ENCODE measurements at regions of chr17 and their contacts with region 1.

Region 1: DNA sequence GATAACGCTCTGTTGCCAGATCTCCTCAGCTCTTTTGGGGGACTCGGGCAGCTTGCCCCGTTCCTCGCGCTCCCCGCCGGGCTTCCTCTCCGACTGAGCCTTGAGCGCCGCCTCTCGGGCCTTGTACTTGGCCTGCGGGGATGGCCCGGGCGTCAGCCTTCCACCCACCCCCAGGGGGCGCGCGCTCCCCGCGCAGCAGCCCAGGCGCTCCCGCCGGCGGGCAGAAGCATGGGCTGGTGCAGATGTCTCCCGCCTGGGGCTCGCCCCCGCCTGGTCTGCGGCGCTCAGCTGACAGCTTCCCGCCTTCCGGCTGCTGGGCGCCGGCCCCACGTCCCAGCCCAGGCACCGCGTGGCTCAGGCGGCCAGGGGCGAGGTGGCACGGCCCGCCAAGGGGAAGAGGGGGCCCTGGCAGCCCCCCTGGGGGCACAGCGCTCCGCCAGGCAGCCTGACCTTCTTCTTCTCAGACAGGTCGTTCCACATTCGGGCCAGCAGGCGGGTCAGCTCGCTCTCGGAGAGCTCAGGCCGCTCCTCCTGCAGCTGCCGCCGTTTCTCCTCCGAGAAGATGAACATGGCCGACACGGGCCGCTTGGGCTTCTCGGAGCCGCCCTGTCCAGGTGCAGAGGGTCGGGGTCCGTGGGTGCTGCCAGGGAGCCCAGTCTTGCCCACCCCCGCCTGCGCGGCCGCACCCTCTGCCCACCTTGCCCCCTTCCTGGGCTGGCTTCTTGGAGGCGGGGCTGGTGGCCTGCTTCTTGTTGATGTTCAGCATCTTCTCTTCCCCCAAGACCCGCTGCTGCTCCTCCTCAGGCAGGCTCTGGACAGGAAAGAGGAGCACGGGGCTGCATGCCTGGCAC is 8.9 kb downstream of the UBTF start:
- DNase-seq: peak; percentile 89
- H3K4me3 Mint-ChIP-seq: peak overlapping the region; percentile 73
- H3K27ac Mint-ChIP-seq: peak overlapping the region; percentile 91
- H3K4me1 Mint-ChIP-seq: peaks cover 33% of the 10 kb centered on the region
- H3K27me3 Mint-ChIP-seq: no peaks in the 10 kb centered on the region

Region 2: GRCh38 chr17:44199553-44200477 is 10.8 kb before region 1 on chr17 and contains the start of gene ATXN7L3:
- intact Hi-C with region 1: loop called (anchors 1 kb)
- DNase-seq: peak; percentile 97
- H3K4me3 Mint-ChIP-seq: peak within 1 kb of the TSS; percentile 94
- H3K27ac Mint-ChIP-seq: peak within 1 kb of the TSS; percentile 90
- H3K4me1 Mint-ChIP-seq: peaks cover 48% of the 10 kb centered on the region
- H3K27me3 Mint-ChIP-seq: no peaks in the 10 kb centered on the region
- total RNA-seq, gene ATXN7L3: 125 and 126 TPM in 2 replicates

Region 3: GRCh38 chr17:44331249-44331760 is 120.7 kb after region 1 on chr17:
- intact Hi-C with region 1: loop called (anchors 1 kb)
- DNase-seq: peak; percentile 65
- H3K4me3 Mint-ChIP-seq: no peak overlapping the region
- H3K27ac Mint-ChIP-seq: no peak overlapping the region
- H3K4me1 Mint-ChIP-seq: peaks cover 12% of the 10 kb centered on the region
- H3K27me3 Mint-ChIP-seq: no peaks in the 10 kb centered on the region

Measured in activated T-helper 1 cell treated with anti-CD3 and anti-CD28 coated beads, Interleukin-12 subunit alpha, Interleukin-12 subunit beta, Interleukin-2, Interleukin-4 antibody, amounts not matched to agents 30 ng/mL and 10 ng/mL and 1 ng/mL, durations not matched to agents 14 hours and 24 hours and 36 hours (primary cell).